ENCODE measurements at regions of chr17 and their contacts with region 1.

Region 1: GRCh38 chr17:75109407-75110233 is at the start of gene ARMC7:
- DNase-seq: peak; percentile 92
- ATAC-seq: peak; percentile 80
- H3K4me3 ChIP-seq: peak within 1 kb of the TSS; percentile 80 to 94 (median 84)
- H3K4me3 Mint-ChIP-seq: peak within 1 kb of the TSS; percentile 90
- H3K27ac ChIP-seq: peak within 1 kb of the TSS; percentile 54 to 56
- H3K27ac Mint-ChIP-seq: peak within 1 kb of the TSS; percentile 90
- H3K4me1 ChIP-seq: peaks cover 25 to 29% of the 10 kb centered on the region in 2 donors
- H3K4me1 Mint-ChIP-seq: peaks cover 31% of the 10 kb centered on the region
- H3K27me3 ChIP-seq: peaks cover 0 to 2% (median 0%) of the 10 kb centered on the region in 4 experiments
- H3K27me3 Mint-ChIP-seq: no peaks in the 10 kb centered on the region
- CTCF ChIP-seq: no peak
- total RNA-seq, gene ARMC7: 15.7 and 15.9 TPM in 2 replicates

Region 2: DNA sequence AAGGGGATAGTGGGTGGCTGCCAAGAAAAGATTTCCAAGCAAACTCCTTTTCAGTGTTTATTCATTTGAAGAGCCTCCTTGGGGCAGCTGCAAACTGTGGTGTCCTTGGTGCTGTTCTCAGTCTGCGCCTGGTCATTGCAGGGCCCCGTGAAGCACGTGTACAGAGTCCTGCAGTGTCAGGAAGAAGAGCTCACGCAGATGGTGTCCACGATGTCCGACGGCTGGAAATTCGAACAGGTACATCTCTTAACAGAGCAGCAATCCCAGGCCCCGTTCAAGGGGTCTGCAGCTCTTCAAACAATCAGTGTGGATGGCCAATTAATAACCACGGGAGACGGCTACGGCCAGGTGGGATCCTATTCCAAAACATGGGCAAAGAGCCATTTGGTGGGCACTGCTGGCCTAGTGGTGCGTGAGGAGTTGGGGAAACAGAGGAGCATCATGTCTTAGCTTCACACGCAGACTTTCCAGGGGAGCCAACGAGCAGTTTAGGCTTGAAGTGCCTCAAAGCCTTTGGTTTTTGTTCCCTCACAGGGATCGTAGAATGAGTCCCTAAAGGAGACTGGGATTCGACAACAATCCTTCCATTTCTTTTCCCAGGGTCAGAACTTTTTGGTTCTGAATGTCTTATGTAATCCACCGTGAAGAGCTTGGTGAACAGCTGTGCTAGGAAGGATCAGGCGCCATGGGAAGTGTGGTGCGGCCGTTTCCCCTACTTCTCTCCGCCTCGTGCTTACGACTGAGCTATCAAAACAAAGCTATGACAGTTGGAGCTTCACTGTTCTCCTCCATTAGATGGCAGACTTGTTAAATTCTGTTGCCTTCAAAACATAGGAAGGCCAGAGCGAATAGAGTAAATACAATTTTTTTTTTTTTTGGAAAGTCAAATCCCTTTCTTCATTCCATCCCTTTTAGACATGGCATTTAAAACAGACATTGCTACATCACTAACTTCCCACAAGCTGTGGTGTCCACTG is 50.0 kb before region 1 on chr17:
- CTCF ChIA-PET with region 1: interaction called, 10 read pairs
- POLR2A ChIA-PET with region 1: interaction called, 4 read pairs
- intact Hi-C with region 1: no loop called
- DNase-seq: no peak
- ATAC-seq: no peak
- H3K4me3 ChIP-seq: no peak overlapping the region
- H3K4me3 Mint-ChIP-seq: no peak overlapping the region
- H3K27ac ChIP-seq: no peak overlapping the region
- H3K27ac Mint-ChIP-seq: no peak overlapping the region
- H3K4me1 ChIP-seq: no peaks in the 10 kb centered on the region
- H3K4me1 Mint-ChIP-seq: no peaks in the 10 kb centered on the region
- H3K27me3 ChIP-seq: no peaks in the 10 kb centered on the region
- H3K27me3 Mint-ChIP-seq: no peaks in the 10 kb centered on the region
- CTCF ChIP-seq: no peak

Region 3: GRCh38 chr17:75131280-75132017 is 21.8 kb after region 1 on chr17 and contains the start of gene NT5C:
- CTCF ChIA-PET with region 1: interaction called, 262 read pairs
- POLR2A ChIA-PET with region 1: interaction called, 49 read pairs
- intact Hi-C with region 1: loop called (anchors 1 kb)
- DNase-seq: peak; percentile 88
- ATAC-seq: peak; percentile 83
- H3K4me3 ChIP-seq: peak within 1 kb of the TSS; percentile 40 to 95 (median 87)
- H3K4me3 Mint-ChIP-seq: peak within 1 kb of the TSS; percentile 90
- H3K27ac ChIP-seq: peak within 1 kb of the TSS; percentile 64 to 85
- H3K27ac Mint-ChIP-seq: peak within 1 kb of the TSS; percentile 96
- H3K4me1 ChIP-seq: peaks cover 11 to 25% of the 10 kb centered on the region in 2 donors
- H3K4me1 Mint-ChIP-seq: peaks cover 35% of the 10 kb centered on the region
- H3K27me3 ChIP-seq: no peaks in the 10 kb centered on the region
- H3K27me3 Mint-ChIP-seq: no peaks in the 10 kb centered on the region
- CTCF ChIP-seq: peak; percentile 73
- total RNA-seq, gene NT5C: 98.9 and 103 TPM in 2 replicates

Region 4: GRCh38 chr17:75163074-75163473 is 53.5 kb after region 1 on chr17:
- CTCF ChIA-PET with region 1: interaction called, 373 read pairs
- POLR2A ChIA-PET with region 1: interaction called, 3 read pairs
- intact Hi-C with region 1: no loop called
- DNase-seq: no peak
- ATAC-seq: no peak
- H3K4me3 ChIP-seq: no peak overlapping the region
- H3K4me3 Mint-ChIP-seq: no peak overlapping the region
- H3K27ac ChIP-seq: no peak overlapping the region
- H3K27ac Mint-ChIP-seq: no peak overlapping the region
- H3K4me1 ChIP-seq: no peaks in the 10 kb centered on the region
- H3K4me1 Mint-ChIP-seq: no peaks in the 10 kb centered on the region
- H3K27me3 ChIP-seq: no peaks in the 10 kb centered on the region
- H3K27me3 Mint-ChIP-seq: no peaks in the 10 kb centered on the region
- CTCF ChIP-seq: no peak

Region 5: GRCh38 chr17:75191584-75191983 is 82.0 kb after region 1 on chr17:
- CTCF ChIA-PET with region 1: interaction called, 11 read pairs
- POLR2A ChIA-PET with region 1: no interaction called
- intact Hi-C with region 1: no loop called
- DNase-seq: no peak
- ATAC-seq: no peak
- H3K4me3 ChIP-seq: no peak overlapping the region
- H3K4me3 Mint-ChIP-seq: no peak overlapping the region
- H3K27ac ChIP-seq: no peak overlapping the region
- H3K27ac Mint-ChIP-seq: no peak overlapping the region
- H3K4me1 ChIP-seq: no peaks in the 10 kb centered on the region
- H3K4me1 Mint-ChIP-seq: no peaks in the 10 kb centered on the region
- H3K27me3 ChIP-seq: no peaks in the 10 kb centered on the region
- H3K27me3 Mint-ChIP-seq: no peaks in the 10 kb centered on the region
- CTCF ChIP-seq: no peak

Region 6: DNA sequence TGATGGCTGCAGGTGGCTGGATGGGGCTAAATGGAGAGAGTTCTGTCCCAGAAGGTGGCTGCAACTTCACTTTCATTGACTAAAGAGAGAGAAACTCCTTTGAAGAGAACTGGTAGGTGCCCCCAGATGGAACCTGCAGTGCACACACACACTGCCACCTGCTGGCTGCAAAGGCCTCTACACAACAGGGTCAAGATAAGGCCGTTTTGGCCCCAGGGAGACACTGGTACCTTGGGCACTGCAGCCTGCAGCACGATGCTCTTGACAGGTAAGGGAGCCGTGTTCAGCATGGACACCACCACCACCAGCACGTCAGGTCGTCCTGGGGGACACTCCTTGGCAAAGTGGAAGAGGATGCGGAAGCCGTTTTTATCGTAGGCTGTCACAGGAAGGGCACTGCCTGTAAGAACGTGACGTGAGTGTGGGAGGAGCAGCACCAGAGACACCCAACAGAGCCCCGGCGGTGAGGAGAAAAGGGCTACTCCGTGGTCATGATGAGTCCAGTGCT is 129.1 kb after region 1 on chr17:
- CTCF ChIA-PET with region 1: interaction called, 25 read pairs
- POLR2A ChIA-PET with region 1: no interaction called
- intact Hi-C with region 1: loop called (anchors 1 kb)
- DNase-seq: peak; percentile 75
- ATAC-seq: peak; percentile 61
- H3K4me3 ChIP-seq: no peak overlapping the region
- H3K4me3 Mint-ChIP-seq: peak overlapping the region; percentile 33
- H3K27ac ChIP-seq: no peak overlapping the region
- H3K27ac Mint-ChIP-seq: peak overlapping the region; percentile 92
- H3K4me1 ChIP-seq: peaks cover 10 to 40% of the 10 kb centered on the region in 2 donors
- H3K4me1 Mint-ChIP-seq: peaks cover 30% of the 10 kb centered on the region
- H3K27me3 ChIP-seq: no peaks in the 10 kb centered on the region
- H3K27me3 Mint-ChIP-seq: no peaks in the 10 kb centered on the region
- CTCF ChIP-seq: peak; percentile 83